Aorta (tissue), 5 donors: ENCODE measurements at regions of chr6 and their contacts with region 1.

Region 1: GRCh38 chr6:163355426-163355991 is 59.0 kb upstream of the QKI start:
- DNase-seq: peak; percentile 82 to 90
- ATAC-seq: peak; percentile 70
- H3K4me3 ChIP-seq: no peak overlapping the region
- H3K27ac ChIP-seq: peak overlapping the region in 1 of 2 donors; percentile 31
- H3K4me1 ChIP-seq: no peaks in the 10 kb centered on the region
- H3K27me3 ChIP-seq: no peaks in the 10 kb centered on the region

Region 2: DNA sequence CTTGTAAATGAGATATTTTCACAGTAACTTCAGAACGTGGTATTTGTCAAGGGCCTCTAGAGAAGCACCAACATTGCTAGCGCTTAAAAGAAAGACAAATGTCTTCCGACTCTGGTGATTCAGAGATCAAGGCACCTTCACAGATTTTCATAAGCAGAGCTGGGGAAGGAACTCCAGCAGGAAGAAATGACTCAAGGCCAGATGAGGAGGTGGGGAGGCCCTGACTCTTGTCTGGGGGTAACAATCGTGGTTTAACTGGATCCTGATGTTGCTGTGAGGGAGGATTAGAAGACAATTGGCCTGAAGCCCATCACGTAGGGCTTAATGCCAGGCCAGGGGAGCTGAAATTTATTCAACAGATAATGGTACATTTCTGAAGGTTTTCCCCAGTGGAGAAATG is 63.9 kb before region 1 on chr6:
- intact Hi-C with region 1: no loop called
- DNase-seq: no peak
- ATAC-seq: no peak
- H3K4me3 ChIP-seq: no peak overlapping the region
- H3K27ac ChIP-seq: no peak overlapping the region
- H3K4me1 ChIP-seq: no peaks in the 10 kb centered on the region
- H3K27me3 ChIP-seq: no peaks in the 10 kb centered on the region

Region 3: GRCh38 chr6:163405412-163406309 is 50.2 kb after region 1 on chr6:
- intact Hi-C with region 1: loop called in 1 of 2 experiments (anchors 5 kb)
- DNase-seq: peak in 1 of 2 donors; percentile 90
- ATAC-seq: peak; percentile 86
- H3K4me3 ChIP-seq: no peak overlapping the region
- H3K27ac ChIP-seq: peak overlapping the region; percentile 8 to 18
- H3K4me1 ChIP-seq: no peaks in the 10 kb centered on the region
- H3K27me3 ChIP-seq: no peaks in the 10 kb centered on the region

Region 4: DNA sequence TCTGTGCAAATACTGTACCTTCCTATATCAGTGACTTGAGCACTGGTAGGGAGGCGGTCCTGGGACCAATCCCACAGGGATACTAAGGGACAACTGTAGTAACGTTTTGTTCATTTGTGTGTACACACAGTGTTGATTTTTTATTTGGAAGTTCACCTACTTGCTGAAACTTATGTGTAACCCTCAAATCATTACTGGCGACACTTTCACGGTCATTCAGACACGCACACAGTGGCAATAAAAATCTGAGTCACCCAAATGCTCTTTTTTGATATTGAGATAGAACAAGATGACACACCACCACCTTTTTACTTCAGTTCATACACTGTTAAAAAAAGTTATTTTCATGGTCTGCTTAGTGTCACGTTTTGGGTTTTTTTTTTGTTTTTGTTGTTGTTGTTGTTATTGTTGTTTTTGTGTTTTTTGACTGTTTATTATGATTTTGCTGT is 138.8 kb after region 1 on chr6:
- intact Hi-C with region 1: no loop called
- DNase-seq: no peak
- ATAC-seq: no peak
- H3K4me3 ChIP-seq: no peak overlapping the region
- H3K27ac ChIP-seq: no peak overlapping the region
- H3K4me1 ChIP-seq: no peaks in the 10 kb centered on the region
- H3K27me3 ChIP-seq: no peaks in the 10 kb centered on the region